ENCODE measurements at regions of chr17 and their contacts with region 1.

Region 1: GRCh38 chr17:50397111-50397918 is at the start of gene LRRC59:
- DNase-seq: peak; percentile 93
- H3K4me3 Mint-ChIP-seq: peak within 1 kb of the TSS; percentile 80
- H3K27ac Mint-ChIP-seq: peak within 1 kb of the TSS; percentile 89
- H3K4me1 Mint-ChIP-seq: peaks cover 33% of the 10 kb centered on the region
- H3K27me3 Mint-ChIP-seq: no peaks in the 10 kb centered on the region
- total RNA-seq, gene LRRC59: 60.8 to 68.5 TPM

Region 2: DNA sequence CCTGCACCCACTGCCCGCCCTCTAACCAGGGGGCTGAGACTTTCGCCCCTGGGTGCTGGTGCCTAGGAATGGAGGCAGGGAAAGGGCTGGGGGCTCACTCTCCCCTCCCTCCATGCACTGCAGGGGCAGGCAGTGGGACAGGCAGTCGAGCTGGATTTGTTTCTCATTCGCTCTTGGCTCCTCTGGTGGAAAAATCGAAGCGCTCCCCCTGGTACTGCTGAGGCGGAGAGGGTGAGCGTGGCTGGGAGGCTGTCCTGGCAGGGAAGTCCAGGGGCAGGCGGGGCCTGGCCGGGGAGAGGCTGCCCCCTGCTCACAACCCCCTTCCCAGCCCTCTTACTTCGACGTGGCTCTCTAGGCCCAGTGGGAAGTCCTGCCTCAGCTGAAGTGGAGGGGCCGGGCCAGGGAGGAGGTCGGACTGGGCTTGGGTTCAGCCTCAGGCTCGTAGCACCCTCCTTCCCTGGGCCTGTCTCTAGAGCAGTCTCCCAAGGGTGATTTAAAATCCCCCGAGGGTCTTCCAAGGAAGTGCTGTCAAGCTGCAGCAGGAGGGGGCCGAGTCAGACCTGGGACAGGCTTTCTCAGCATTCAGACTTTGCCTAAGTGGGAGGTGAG is 139.6 kb before region 1 on chr17:
- CTCF ChIA-PET with region 1: no interaction called
- POLR2A ChIA-PET with region 1: no interaction called
- DNase-seq: no peak
- H3K4me3 Mint-ChIP-seq: no peak overlapping the region
- H3K27ac Mint-ChIP-seq: no peak overlapping the region
- H3K4me1 Mint-ChIP-seq: no peaks in the 10 kb centered on the region
- H3K27me3 Mint-ChIP-seq: peaks cover 8% of the 10 kb centered on the region

Region 3: DNA sequence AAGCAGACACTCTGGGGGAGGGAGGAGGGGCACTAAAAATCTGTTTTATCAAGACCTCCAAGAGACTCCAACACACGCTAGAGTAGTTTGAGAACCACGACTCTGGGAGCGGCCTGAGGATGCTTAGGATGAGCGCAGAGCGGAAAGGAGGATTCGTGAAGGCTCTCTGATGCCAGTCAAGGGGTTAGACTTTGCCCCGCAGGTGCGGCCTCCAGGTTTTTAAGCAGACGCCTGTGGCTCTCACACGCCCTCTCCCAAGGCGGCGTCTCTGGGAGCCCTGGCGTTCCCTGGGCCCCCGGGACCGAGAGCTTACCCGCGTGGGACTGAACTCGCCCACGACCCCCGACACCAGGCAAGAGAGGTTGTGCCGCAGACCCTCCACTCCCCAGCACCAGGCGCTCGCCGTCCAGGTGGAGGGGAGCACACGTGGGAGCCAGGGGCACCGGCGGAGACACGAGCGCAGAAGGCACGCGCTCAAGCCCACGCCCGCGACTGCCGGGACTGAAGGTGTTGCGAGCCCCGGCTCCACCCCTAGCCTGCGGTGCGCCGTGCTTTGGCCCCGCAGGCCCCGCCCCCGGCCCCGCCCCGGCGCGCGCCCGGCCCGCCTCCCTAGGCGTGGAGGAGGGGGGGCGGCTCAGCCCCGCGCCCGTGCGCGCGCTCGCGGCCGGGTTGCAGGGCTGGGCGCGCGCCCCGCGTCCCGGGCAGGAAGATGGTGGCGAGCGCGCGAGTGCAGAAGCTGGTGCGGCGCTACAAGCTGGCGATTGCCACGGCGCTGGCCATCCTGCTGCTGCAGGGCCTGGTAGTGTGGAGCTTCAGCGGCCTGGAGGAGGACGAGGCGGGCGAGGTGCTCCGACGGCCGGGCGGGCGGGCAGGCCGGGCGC is 51.6 kb before region 1 on chr17 and contains the start of gene XYLT2:
- CTCF ChIA-PET with region 1: interaction called, 14 read pairs
- POLR2A ChIA-PET with region 1: no interaction called
- DNase-seq: peak; percentile 90
- H3K4me3 Mint-ChIP-seq: peak within 1 kb of the TSS; percentile 88
- H3K27ac Mint-ChIP-seq: peak within 1 kb of the TSS; percentile 96
- H3K4me1 Mint-ChIP-seq: peaks cover 35% of the 10 kb centered on the region
- H3K27me3 Mint-ChIP-seq: no peaks in the 10 kb centered on the region
- total RNA-seq, gene XYLT2: 22.1 to 23.6 TPM

Region 4: DNA sequence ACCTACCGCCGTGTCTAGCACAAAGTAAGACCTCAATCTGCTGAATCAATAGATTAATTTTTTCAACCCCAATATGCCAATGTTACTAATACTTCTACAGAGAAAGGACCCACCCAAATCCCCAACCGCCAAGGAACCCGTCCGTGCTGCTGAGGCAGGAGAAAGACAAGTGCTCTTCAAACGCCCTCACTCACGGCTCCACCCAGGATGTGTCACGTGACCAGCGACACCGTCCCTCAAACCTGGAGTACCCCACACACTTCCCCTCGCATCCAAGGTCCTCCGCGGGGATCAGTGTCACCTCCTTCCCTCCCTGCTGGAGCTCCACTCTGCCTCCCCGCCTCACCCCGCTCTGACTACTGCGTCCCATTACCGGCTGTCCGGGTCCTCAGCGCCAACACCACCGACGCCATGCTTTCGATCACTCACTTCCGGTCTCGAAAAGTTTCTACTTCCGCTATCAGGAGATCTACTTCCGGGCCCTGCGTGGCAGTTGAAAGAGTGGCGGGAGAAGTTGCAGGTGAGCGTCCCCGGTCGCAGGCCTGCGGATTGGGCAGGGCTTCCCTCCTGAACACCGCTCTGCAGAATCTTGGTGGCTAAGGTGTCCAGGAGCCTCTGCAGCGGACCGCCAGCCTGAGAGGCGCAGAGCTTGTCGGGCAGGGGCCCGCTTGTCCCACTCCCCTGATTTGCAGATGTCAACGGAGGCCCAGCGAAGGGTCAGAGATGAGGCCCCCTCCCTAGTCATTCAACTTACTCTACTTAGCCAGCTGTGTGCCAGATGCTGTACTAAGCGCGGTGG is 24.4 kb before region 1 on chr17 and contains the starts of genes EME1 and MRPL27:
- CTCF ChIA-PET with region 1: interaction called, 76 read pairs
- POLR2A ChIA-PET with region 1: no interaction called
- DNase-seq: peak; percentile 91
- H3K4me3 Mint-ChIP-seq: peak within 1 kb of the TSS; percentile 96
- H3K27ac Mint-ChIP-seq: peak within 1 kb of the TSS; percentile 100
- H3K4me1 Mint-ChIP-seq: peaks cover 31% of the 10 kb centered on the region
- H3K27me3 Mint-ChIP-seq: no peaks in the 10 kb centered on the region
- total RNA-seq, gene EME1: 19.9 to 21.8 TPM
- total RNA-seq, gene MRPL27: 62.9 to 71.4 TPM

Region 5: DNA sequence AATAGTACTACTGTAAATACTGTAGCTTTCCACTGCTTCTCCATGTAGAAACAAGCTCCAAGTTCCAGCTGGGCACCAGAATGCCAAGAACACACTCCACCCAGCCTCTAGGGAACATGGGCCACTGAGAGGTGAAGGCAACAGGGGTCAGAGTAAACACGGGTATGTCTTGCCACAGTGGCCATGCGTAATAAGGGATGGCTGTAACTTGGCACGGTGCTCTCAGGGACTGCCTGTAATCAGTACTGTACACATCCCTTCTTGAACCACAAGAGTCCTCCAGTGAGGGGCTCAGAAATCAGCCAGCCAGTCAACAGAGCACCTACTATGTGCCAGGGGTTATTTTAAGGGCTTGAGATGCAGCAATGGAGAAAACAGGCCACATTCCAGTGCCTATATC is 10.8 kb before region 1 on chr17:
- CTCF ChIA-PET with region 1: interaction called, 76 read pairs
- POLR2A ChIA-PET with region 1: no interaction called
- DNase-seq: no peak
- H3K4me3 Mint-ChIP-seq: no peak overlapping the region
- H3K27ac Mint-ChIP-seq: peak overlapping the region; percentile 17
- H3K4me1 Mint-ChIP-seq: no peaks in the 10 kb centered on the region
- H3K27me3 Mint-ChIP-seq: no peaks in the 10 kb centered on the region

Region 6: GRCh38 chr17:50425682-50426471 is 28.6 kb after region 1 on chr17 and contains the start of gene ACSF2:
- CTCF ChIA-PET with region 1: interaction called, 21 read pairs
- POLR2A ChIA-PET with region 1: interaction called, 3 read pairs
- DNase-seq: peak; percentile 77
- H3K4me3 Mint-ChIP-seq: peak within 1 kb of the TSS; percentile 81
- H3K27ac Mint-ChIP-seq: peak within 1 kb of the TSS; percentile 87
- H3K4me1 Mint-ChIP-seq: peaks cover 33% of the 10 kb centered on the region
- H3K27me3 Mint-ChIP-seq: no peaks in the 10 kb centered on the region
- total RNA-seq, gene ACSF2: 24.5 to 31.4 TPM